Activated CD8-positive, alpha-beta memory T cell treated with anti-CD3 and anti-CD28 coated beads, Interleukin-2, amount 10 ng/mL, durations not matched to agents 7 days and 5 days (primary cell): ENCODE measurements at regions of chr11 and their contacts with region 1.

Region 1: GRCh38 chr11:60775420-60775961 is 9.6 kb upstream of the MS4A10 start:
- DNase-seq: peak; percentile 87
- ATAC-seq: peak; percentile 88
- H3K4me3 Mint-ChIP-seq: no peak overlapping the region
- H3K27ac Mint-ChIP-seq: no peak overlapping the region
- H3K4me1 Mint-ChIP-seq: peaks cover 5% of the 10 kb centered on the region
- H3K27me3 Mint-ChIP-seq: peaks cover 10% of the 10 kb centered on the region

Region 2: GRCh38 chr11:60762851-60763691 is 12.4 kb before region 1 on chr11:
- CTCF ChIA-PET with region 1: interaction called, 32 read pairs
- DNase-seq: no peak
- ATAC-seq: no peak
- H3K4me3 Mint-ChIP-seq: no peak overlapping the region
- H3K27ac Mint-ChIP-seq: no peak overlapping the region
- H3K4me1 Mint-ChIP-seq: peaks cover 3% of the 10 kb centered on the region
- H3K27me3 Mint-ChIP-seq: peaks cover 51% of the 10 kb centered on the region